PC-3 (cell line): ENCODE measurements at regions of chr3 and their contacts with region 1.

Region 1: DNA sequence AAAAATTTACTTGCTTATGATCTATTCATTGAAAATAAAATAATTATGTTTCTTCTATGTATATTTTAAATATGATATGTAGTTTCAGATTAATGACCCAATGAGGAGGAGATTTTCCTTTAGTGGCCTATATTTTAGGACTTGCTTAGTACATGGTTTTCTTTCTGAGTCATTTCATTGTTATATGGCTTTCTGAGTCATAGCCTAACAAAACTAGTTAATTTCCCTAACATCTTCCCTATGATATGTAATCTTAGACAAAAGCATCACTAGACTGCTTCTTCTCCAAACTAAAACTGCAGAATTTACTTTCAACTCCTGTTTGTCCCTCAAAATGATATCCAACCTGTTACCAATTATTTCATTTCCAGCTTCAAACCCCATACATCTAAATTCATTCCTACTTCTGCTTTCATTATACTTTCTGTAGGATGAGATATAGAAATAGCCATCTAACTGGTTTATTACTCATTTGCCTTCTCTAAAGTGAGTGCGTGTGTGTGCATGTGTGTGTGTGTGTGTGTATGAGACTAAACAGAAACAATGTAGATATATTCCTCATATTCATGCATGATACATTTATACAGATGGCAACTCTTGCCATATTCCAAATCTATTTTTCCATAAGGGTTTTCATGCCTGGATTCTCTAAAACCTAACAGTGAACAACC is 915.0 kb upstream of the GBE1 start:
- DNase-seq: peak; percentile 75
- ATAC-seq: peak; percentile 90
- H3K4me3 ChIP-seq: no peak overlapping the region
- H3K27ac ChIP-seq: no peak overlapping the region
- H3K4me1 ChIP-seq: peaks cover 21% of the 10 kb centered on the region
- H3K27me3 ChIP-seq: no peaks in the 10 kb centered on the region
- CTCF ChIP-seq: no peak

Region 2: GRCh38 chr3:82927309-82928253 is 251.1 kb after region 1 on chr3:
- CTCF ChIA-PET with region 1: no interaction called
- POLR2A ChIA-PET with region 1: no interaction called
- intact Hi-C with region 1: loop called (anchors 5 kb)
- DNase-seq: peak; percentile 63
- ATAC-seq: peak; percentile 99
- H3K4me3 ChIP-seq: no peak overlapping the region
- H3K27ac ChIP-seq: peak overlapping the region; percentile 38
- H3K4me1 ChIP-seq: peaks cover 13% of the 10 kb centered on the region
- H3K27me3 ChIP-seq: no peaks in the 10 kb centered on the region
- CTCF ChIP-seq: no peak